ENCODE measurements at regions of chr7 and their contacts with region 1.

Region 1: GRCh38 chr7:12490117-12490688 is 80.3 kb upstream of the SCIN start:
- DNase-seq: no peak
- H3K4me3 Mint-ChIP-seq: no peak overlapping the region
- H3K27ac Mint-ChIP-seq: no peak overlapping the region
- H3K4me1 Mint-ChIP-seq: no peaks in the 10 kb centered on the region
- H3K27me3 Mint-ChIP-seq: peaks cover 13% of the 10 kb centered on the region

Region 2: GRCh38 chr7:11427686-11428273 is 1062.4 kb before region 1 on chr7:
- intact Hi-C with region 1: loop called (anchors 5 kb)
- DNase-seq: no peak
- H3K4me3 Mint-ChIP-seq: no peak overlapping the region
- H3K27ac Mint-ChIP-seq: no peak overlapping the region
- H3K4me1 Mint-ChIP-seq: no peaks in the 10 kb centered on the region
- H3K27me3 Mint-ChIP-seq: no peaks in the 10 kb centered on the region

Region 3: GRCh38 chr7:12067141-12067831 is 422.9 kb before region 1 on chr7:
- intact Hi-C with region 1: loop called (anchors 2 kb)
- DNase-seq: peak; percentile 20
- H3K4me3 Mint-ChIP-seq: no peak overlapping the region
- H3K27ac Mint-ChIP-seq: no peak overlapping the region
- H3K4me1 Mint-ChIP-seq: no peaks in the 10 kb centered on the region
- H3K27me3 Mint-ChIP-seq: peaks cover 12% of the 10 kb centered on the region

Region 4: GRCh38 chr7:12389089-12389700 is 101.0 kb before region 1 on chr7:
- intact Hi-C with region 1: loop called (anchors 1 kb)
- DNase-seq: peak; percentile 22
- H3K4me3 Mint-ChIP-seq: no peak overlapping the region
- H3K27ac Mint-ChIP-seq: no peak overlapping the region
- H3K4me1 Mint-ChIP-seq: no peaks in the 10 kb centered on the region
- H3K27me3 Mint-ChIP-seq: no peaks in the 10 kb centered on the region

Region 5: GRCh38 chr7:12434009-12434642 is 56.1 kb before region 1 on chr7:
- intact Hi-C with region 1: loop called (anchors 1 kb)
- DNase-seq: no peak
- H3K4me3 Mint-ChIP-seq: no peak overlapping the region
- H3K27ac Mint-ChIP-seq: no peak overlapping the region
- H3K4me1 Mint-ChIP-seq: no peaks in the 10 kb centered on the region
- H3K27me3 Mint-ChIP-seq: peaks cover 2% of the 10 kb centered on the region

Region 6: DNA sequence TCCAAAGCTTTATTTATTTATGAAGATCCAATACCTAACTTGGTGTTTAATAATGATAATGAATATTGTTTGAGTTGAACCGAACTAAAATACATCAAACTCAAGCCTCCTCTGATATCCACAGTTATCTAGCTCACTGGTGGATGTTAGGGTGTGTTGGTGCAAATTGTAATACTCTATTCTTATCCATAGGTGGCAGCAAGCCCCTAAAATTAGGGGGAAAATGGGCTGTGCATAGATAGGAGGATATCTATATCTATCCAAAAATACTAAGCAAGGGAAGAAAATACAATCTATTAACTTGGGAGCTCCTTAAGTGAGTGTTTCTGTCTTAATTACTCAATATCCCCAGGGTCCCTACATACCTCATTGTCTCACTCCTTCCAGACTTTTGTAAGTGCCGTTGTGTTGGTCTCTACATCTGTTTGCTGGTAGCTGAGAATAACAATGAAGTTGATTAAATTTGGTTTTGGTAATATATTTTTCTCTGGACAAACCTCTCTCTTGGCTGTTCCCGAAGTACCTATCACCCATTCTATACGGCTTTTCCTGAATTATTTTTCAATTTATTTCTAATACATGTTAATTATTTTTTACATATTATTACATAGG is 31.6 kb before region 1 on chr7:
- intact Hi-C with region 1: loop called (anchors 1 kb)
- DNase-seq: no peak
- H3K4me3 Mint-ChIP-seq: no peak overlapping the region
- H3K27ac Mint-ChIP-seq: no peak overlapping the region
- H3K4me1 Mint-ChIP-seq: no peaks in the 10 kb centered on the region
- H3K27me3 Mint-ChIP-seq: peaks cover 6% of the 10 kb centered on the region

Measured in activated T-helper 1 cell treated with anti-CD3 and anti-CD28 coated beads, Interleukin-12 subunit alpha, Interleukin-12 subunit beta, Interleukin-2, Interleukin-4 antibody, amounts not matched to agents 30 ng/mL and 10 ng/mL and 1 ng/mL, durations not matched to agents 14 hours and 24 hours and 36 hours (primary cell).